Sigmoid colon (tissue), 7 donors: ENCODE measurements at regions of chr19 and their contacts with region 1.

Region 1: GRCh38 chr19:58416604-58417003 is 8.2 kb downstream of the ZNF584 start:
- DNase-seq: no peak
- H3K4me3 ChIP-seq: no peak overlapping the region
- H3K27ac ChIP-seq: no peak overlapping the region
- H3K4me1 ChIP-seq: no peaks in the 10 kb centered on the region
- H3K27me3 ChIP-seq: no peaks in the 10 kb centered on the region
- CTCF ChIP-seq: no peak
- EP300 ChIP-seq: no peak
- POLR2A ChIP-seq: no peak

Region 2: GRCh38 chr19:58434217-58434616 is 17.6 kb after region 1 on chr19:
- intact Hi-C with region 1: loop called (anchors 1 kb)
- DNase-seq: no peak
- H3K4me3 ChIP-seq: no peak overlapping the region
- H3K27ac ChIP-seq: no peak overlapping the region
- H3K4me1 ChIP-seq: peaks cover 0 to 6% (median 4%) of the 10 kb centered on the region in 4 donors
- H3K27me3 ChIP-seq: no peaks in the 10 kb centered on the region
- CTCF ChIP-seq: no peak
- EP300 ChIP-seq: no peak
- POLR2A ChIP-seq: no peak